T-cell (primary cell): ENCODE measurements at regions of chr6 and their contacts with region 1.

Region 1: DNA sequence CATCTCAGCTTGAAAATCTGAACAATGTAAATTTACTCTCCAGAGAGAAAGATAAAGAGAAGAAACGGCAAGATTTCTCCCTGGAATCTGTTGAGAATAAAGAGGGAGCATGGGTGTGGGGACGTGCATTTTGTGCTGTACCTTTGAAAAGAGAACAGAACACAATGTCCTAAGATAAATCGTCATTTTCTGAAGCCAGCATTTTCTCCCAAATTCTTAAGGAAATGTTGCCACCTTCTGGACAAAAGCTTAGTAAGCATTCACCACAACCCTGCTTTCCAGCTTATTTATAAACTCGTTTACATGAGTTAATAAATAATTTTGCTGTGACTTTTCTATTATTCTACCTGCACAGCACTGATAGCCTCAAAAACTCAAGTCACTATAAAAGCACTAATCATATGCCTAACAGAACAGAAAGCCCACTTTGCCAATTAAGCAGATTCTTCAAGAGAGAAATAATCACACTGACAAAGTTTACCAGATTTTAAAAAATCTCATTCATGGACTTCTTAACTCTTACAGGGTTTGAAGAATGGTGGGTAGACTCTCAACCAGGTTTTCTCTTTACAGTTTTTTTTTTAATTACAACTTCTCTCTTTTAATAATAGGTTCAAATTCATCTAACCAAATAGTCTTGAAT is 155.8 kb downstream of the MBOAT1 start:
- DNase-seq: peak in 1 of 35 experiments; percentile 31
- ATAC-seq: no peak
- H3K4me3 ChIP-seq: no peak overlapping the region
- H3K4me3 Mint-ChIP-seq: no peak overlapping the region
- H3K27ac ChIP-seq: no peak overlapping the region
- H3K27ac Mint-ChIP-seq: no peak overlapping the region
- H3K4me1 ChIP-seq: no peaks in the 10 kb centered on the region
- H3K4me1 Mint-ChIP-seq: no peaks in the 10 kb centered on the region
- H3K27me3 ChIP-seq: no peaks in the 10 kb centered on the region
- H3K27me3 Mint-ChIP-seq: no peaks in the 10 kb centered on the region

Region 2: GRCh38 chr6:18595774-18596530 is 1460.5 kb before region 1 on chr6:
- CTCF ChIA-PET with region 1: interaction called in 1 of 2 experiments, 10 read pairs
- POLR2A ChIA-PET with region 1: no interaction called
- DNase-seq: peak in 19 of 35 experiments; percentile 1 to 61 (median 11)
- ATAC-seq: peak in 2 of 4 experiments; percentile 51 to 57
- H3K4me3 ChIP-seq: no peak overlapping the region
- H3K4me3 Mint-ChIP-seq: no peak overlapping the region
- H3K27ac ChIP-seq: no peak overlapping the region
- H3K27ac Mint-ChIP-seq: no peak overlapping the region
- H3K4me1 ChIP-seq: no peaks in the 10 kb centered on the region
- H3K4me1 Mint-ChIP-seq: peaks cover 2 to 7% (median 3%) of the 10 kb centered on the region in 3 donors
- H3K27me3 ChIP-seq: peaks cover 0 to 4% of the 10 kb centered on the region in 2 experiments
- H3K27me3 Mint-ChIP-seq: peaks cover 9 to 24% of the 10 kb centered on the region in 2 donors

Region 3: GRCh38 chr6:20109526-20109925 is 53.1 kb after region 1 on chr6:
- CTCF ChIA-PET with region 1: no interaction called
- POLR2A ChIA-PET with region 1: no interaction called
- DNase-seq: no peak
- ATAC-seq: no peak
- H3K4me3 ChIP-seq: no peak overlapping the region
- H3K4me3 Mint-ChIP-seq: no peak overlapping the region
- H3K27ac ChIP-seq: no peak overlapping the region
- H3K27ac Mint-ChIP-seq: no peak overlapping the region
- H3K4me1 ChIP-seq: no peaks in the 10 kb centered on the region
- H3K4me1 Mint-ChIP-seq: no peaks in the 10 kb centered on the region
- H3K27me3 ChIP-seq: no peaks in the 10 kb centered on the region
- H3K27me3 Mint-ChIP-seq: no peaks in the 10 kb centered on the region

Region 4: DNA sequence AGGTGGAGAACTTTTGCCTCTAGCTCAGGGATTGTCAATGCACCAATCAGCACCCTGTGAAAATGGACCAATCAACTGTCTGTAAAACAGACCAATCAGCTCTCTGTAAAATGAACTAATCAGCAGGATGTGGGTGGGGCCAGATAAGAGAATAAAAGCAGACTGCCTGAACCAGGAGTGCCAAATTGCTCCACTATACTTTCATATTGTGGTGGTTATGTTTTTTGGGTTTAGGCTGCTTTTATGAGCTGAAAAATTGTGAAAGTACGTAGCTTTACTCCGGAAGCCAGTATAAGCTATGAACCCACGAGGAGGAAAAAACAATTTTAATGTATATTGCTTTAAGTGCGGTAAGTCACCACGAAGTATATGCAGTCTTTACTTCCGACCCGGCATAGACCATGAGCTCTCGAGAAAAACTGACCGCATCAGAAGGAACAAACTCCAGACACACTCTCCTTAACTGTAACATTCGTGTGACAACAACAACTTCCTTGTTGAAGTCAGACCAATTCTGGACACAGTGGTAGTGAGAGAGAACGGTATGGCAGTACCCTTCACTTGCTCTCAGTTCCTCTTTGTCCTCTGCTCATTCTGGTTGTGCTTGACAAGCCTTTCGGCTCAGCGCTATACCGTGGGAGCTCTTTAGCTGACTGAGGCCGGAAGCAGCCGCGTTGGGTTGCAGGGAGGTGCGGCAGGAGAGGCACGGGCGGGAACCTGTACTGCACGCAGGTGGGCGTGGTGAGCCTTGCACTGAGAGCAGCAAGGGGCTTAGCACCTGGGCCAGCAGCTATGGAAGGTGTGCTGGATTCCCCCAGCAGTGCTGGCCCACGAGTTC is 263.3 kb after region 1 on chr6:
- CTCF ChIA-PET with region 1: no interaction called
- POLR2A ChIA-PET with region 1: no interaction called
- DNase-seq: peak; percentile 53 to 91 (median 82)
- ATAC-seq: peak; percentile 89 to 96 (median 95)
- H3K4me3 ChIP-seq: peak overlapping the region; percentile 62 to 82
- H3K4me3 Mint-ChIP-seq: peak overlapping the region; percentile 79 to 88 (median 87)
- H3K27ac ChIP-seq: peak overlapping the region; percentile 96
- H3K27ac Mint-ChIP-seq: peak overlapping the region; percentile 93 to 97
- H3K4me1 ChIP-seq: peaks cover 2 to 15% of the 10 kb centered on the region in 2 experiments
- H3K4me1 Mint-ChIP-seq: peaks cover 18 to 28% (median 24%) of the 10 kb centered on the region in 3 donors
- H3K27me3 ChIP-seq: no peaks in the 10 kb centered on the region
- H3K27me3 Mint-ChIP-seq: no peaks in the 10 kb centered on the region